GM10248 (cell line): ENCODE measurements at regions of chr20 and their contacts with region 1.

Region 1: GRCh38 chr20:31723319-31724078 is 831 bp upstream of the BCL2L1 start:
- DNase-seq: peak; percentile 100
- CTCF ChIP-seq: peak; percentile 85

Region 2: DNA sequence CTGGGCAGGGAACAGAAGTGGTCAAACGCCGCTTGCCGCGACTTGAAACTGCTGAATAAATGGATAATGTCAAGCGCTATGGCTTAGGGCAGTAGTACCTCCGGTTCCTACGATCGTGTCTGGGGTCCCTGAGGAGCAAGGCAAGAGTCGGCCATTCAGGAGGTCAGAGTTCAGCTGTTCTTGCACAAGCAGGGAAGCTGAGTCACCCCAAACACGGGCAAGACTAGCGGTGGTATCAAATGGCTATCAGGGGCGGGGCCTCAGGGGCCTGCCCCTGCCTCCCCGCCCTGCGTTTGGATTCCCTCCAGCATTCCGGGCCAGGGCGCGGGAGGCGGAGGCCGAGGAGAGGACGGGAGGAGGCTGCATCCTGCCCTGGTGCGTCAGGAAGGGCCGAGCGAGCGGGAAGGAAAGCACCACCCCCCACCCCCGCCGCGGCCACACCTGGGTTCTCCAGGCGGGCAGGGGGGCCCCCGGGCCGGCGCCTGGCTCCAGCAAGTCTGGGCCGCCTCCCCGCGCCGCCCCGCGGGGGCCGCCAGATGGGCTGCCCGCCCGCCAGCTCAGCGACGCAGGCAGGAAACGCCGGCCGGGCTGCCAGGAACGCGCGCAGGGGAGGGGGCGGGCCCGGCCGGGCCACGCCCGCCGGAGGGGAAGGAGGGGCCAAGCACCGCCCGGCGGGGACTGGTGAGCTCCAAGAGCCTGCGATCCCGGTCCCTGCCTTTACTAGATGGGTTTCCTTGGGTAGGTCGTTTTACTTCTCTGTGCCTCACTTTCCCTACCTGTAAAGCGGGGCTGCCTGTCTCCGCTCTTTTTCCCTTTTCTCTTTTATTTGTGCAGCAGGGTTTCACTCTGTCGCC is 150.6 kb before region 1 on chr20:
- CTCF ChIA-PET with region 1: interaction called, 30 read pairs
- POLR2A ChIA-PET with region 1: no interaction called
- DNase-seq: peak; percentile 93
- CTCF ChIP-seq: no peak

Region 3: DNA sequence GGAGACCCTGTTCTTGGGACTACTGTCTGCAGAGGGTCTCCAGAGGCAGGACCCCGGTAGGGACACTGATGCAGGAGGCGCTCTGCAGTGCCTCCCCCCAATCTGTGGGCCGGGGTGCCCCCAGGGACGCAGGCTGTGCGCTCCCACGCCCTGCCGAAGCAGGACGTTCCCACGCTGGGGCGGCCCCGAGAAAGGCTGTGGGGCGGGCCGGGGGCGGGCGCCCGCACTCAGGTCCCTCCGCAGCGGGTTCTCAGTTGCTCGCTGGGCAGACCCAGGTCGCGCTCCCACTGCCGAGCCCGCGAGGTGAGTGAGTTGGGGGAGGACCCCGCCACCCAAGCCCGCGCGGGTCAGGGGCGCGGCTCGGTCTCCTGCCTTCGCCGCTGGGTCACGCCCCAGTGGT is 85.8 kb before region 1 on chr20 and contains the start of gene COX4I2:
- CTCF ChIA-PET with region 1: interaction called, 114 read pairs
- POLR2A ChIA-PET with region 1: no interaction called
- DNase-seq: no peak
- CTCF ChIP-seq: no peak

Region 4: DNA sequence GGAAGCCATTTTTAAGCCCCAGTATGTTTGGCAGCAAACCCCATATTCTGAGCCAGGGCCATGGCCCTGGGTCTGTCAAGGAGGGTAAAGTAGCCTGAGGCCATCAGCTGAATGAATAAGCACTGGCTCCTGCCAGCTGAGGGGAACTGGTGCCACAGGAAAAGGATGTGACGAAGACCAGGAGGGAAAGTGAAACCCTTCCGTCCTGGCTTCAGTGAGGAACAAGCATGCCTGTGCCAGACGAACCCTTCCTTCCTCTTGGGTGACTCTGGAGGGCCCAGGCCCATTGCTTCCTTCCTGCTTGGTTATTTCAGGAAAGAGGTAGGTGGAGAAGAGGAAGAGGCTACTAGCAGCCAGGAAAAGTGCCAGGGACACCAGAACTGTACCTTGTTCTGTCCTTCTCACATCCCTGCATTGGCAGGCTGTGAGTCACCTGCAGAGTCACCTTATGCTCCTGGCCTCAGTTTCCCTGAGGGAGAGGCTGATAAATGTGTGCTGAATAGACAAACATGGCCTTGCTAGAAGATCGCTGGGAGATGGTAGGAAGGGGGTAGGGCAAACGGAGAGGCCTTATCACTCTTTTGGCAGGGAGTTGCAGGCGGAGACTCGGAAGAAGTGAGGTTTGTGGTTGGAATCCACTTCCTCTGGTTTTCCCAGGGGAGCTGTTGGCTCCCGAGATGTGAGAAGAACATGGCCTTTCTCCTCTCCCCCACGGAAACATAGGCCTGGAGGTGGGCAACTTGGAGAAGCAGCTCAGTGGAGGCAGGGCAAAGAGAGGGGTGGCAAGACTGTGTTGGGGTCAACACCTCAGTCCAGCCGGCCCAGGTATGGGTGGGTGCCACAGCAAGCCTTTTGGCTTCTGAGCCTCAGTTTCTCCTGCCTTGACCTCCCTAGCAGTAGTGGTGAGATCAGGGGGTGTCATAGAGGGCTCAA is 48.3 kb before region 1 on chr20:
- CTCF ChIA-PET with region 1: interaction called, 65 read pairs
- POLR2A ChIA-PET with region 1: interaction called, 3 read pairs
- DNase-seq: peak; percentile 57
- CTCF ChIP-seq: no peak

Region 5: DNA sequence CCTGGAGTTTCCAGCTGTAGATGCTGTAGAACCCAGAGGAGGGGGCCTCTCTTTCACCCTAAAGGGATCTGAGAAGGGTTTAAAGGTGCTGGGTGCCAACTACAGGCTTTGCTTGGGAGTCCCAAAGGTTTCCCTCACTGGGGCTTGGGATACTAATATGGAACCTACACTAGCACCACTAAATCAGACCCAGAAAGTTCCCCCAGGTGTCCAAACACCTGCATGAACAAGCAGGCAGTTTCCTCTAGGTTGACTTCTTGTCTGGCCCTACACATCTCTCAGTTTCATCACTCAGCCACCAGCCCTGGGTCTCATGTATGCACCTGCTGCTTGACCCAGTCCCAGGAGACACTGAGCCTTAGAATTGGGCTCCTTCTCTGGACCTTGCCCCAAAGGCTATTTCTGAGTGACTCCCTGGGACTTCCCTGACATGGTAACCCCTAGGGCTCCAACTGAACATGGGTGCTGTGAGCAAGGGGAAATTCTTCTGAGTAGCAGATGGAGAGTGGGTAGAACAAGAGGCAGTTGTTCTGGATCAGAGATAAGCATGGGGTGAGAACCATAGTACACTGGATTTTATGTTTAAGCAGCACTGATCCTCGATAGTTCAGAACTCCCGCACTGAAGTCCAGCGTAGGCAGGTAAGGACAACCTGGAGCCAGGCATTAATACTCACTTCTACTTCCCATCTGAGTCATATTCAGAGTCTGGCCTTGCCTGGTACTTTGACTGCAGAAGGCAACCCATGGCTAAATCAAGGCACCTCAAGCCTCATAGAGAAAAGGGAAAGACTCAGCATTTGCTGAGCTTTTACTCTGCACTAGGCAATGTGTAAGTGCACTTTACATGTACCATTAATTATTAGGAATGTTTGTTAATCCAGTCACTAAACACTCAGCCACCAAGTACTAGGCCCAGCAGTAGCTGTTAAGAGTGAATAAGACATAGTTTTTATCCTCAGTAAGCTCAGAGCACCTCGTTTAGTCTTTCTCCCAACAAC is 17.6 kb before region 1 on chr20:
- CTCF ChIA-PET with region 1: interaction called, 94 read pairs
- POLR2A ChIA-PET with region 1: no interaction called
- DNase-seq: peak; percentile 44
- CTCF ChIP-seq: no peak

Region 6: DNA sequence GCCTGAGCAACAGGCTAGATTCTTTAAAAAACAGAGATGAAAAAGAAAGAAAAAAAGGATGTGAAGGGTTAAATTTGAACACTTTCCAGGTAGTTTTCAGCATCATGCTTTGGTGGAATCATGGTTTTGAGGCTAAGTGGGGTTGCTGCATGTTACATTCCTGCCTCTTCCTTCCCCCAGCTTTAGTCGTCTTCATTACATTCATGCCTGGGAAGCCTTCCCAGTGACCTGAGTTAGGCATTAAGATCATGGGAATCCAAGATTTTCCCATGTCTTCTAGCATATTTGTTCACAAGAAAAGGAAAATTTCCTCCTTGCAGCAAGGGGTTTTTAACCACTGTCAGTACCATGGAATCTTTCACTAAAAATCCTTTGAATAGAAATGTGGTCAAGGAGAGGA is 27.6 kb after region 1 on chr20:
- CTCF ChIA-PET with region 1: interaction called, 23 read pairs
- POLR2A ChIA-PET with region 1: no interaction called
- DNase-seq: no peak
- CTCF ChIP-seq: no peak

Region 7: DNA sequence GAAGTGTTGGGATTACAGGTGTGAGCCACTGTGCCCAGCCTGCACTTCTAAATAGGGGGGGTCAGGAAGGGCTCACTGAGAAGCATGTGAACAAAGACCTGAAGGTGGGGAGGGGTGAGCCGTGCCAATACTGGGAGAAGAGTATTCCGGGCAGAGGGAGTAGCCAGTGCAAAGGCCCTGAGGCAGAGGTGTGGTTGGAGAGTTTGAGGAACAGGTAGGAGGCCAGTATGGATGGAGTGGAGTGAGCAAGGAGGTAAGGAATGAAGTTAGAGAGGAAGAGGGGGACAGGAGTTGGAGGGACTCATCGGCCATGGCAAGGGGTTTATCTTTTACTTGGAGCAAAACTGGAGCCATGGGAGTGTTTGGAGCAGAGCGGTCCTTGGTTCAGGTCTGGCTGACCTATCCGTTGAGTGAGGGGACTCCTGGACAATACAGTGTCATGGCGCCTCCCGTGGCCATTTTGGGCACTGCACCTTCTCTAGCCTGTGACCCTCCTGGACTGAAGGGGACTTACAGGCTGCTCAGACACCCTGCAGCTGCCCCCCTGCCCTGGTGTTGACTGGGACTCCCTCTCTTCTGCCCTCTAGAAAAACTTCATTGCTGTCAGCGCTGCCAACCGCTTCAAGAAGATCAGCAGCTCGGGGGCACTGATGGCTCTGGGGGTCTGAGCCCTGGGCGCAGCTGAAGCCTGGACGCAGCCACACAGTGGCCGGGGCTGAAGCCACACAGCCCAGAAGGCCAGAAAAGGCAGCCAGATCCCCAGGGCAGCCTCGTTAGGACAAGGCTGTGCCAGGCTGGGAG is 109.8 kb after region 1 on chr20:
- CTCF ChIA-PET with region 1: no interaction called
- POLR2A ChIA-PET with region 1: no interaction called
- DNase-seq: peak; percentile 82
- CTCF ChIP-seq: peak; percentile 79

Region 8: DNA sequence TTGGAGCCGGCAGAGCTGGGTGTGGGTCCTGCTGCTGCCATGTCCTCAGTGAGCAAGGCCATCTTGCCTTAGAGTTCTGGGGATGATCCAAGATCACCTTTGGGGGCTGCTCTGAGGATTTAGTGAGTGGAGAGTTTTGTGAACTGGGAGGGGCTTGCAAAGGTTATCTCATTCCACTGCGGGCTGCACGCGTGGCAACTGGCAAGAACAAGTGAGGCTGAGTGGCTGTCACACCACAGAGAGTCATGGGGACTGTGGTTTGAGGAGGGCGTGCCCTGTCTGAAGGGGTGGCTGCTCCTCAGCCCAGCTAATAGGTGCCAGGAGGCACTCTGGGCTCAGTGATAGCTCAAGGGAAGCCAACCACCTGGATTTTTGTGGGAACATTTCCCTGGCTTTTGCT is 184.5 kb after region 1 on chr20:
- CTCF ChIA-PET with region 1: no interaction called
- POLR2A ChIA-PET with region 1: no interaction called
- DNase-seq: no peak
- CTCF ChIP-seq: no peak

Region 9: GRCh38 chr20:32396646-32397160 is 673.2 kb after region 1 on chr20:
- CTCF ChIA-PET with region 1: no interaction called
- POLR2A ChIA-PET with region 1: no interaction called
- DNase-seq: no peak
- CTCF ChIP-seq: no peak